Left cardiac atrium (tissue), 4 donors: ENCODE measurements at regions of chr22 and their contacts with region 1.

Region 1: GRCh38 chr22:31970490-31971444 is 26.4 kb downstream of the YWHAH start:
- DNase-seq: peak; percentile 83
- ATAC-seq: peak; percentile 95

Region 2: DNA sequence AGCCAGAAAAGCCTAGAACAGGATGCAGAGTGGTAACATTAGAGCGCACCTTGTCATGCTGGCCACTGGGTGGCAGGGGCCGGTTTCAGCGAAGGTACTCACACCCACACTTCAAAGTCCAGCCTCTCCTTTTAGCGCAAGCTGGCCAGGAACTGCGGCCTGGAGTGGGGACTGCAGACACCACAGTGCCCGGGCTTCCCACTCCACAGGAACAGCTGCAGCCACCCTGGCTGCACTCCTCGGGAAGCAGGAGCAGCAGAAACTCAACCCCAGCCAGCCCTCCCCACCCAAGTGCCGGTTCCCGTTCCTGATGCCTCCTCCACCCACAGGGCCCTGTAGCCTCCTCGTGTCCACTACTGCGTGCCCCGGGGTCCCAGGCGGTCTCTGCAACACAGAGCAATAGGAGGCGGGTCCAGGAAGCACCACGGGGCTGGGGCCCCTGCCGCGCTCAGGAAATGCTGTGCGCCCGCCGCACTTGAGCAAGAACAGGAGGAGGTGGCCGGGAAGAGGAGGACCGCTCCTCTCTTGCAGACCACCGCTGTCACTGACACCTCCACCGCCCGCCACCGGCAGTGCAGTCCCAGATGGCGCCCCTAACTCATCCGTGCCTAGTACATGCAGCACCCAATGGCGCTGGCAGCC is 231.9 kb after region 1 on chr22:
- intact Hi-C with region 1: loop called in 1 of 2 experiments (anchors 10 kb)
- DNase-seq: no peak
- ATAC-seq: peak; percentile 45 to 48

Region 3: GRCh38 chr22:32265882-32266767 is 295.4 kb after region 1 on chr22:
- intact Hi-C with region 1: loop called (anchors 5 to 10 kb)
- DNase-seq: peak; percentile 77
- ATAC-seq: peak; percentile 73 to 74